ENCODE measurements at regions of chr1 and their contacts with region 1.

Region 1: DNA sequence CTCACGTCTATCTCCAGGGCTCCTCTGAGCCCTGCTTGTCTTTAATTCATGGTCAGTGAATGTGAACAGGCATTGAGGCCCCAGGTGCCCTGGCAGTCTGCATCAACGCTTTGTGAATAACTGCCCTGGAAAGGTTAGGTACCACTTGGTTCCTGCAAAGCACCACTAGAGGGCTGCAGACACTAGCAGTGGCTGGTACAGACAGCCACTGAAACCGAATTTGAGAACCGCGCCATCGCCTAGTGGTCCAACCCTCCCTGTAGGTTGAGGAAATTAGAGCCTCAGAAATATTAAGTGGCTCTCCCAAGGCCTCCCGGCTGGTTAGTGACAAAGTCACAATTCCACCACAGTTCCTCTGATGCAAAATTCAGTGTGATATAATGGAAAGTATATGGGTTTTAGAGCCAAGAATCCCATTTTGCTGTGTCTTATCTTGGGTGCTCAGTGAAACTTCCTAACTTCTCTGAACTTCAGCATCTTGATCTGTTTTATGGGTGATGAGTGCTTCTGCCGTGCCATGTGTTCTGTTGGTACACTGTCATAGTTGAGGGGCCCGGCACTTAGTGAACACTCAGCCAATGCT is 46.2 kb upstream of the BCL9 start:
- DNase-seq: peak; percentile 73 to 88 (median 85)
- H3K4me3 ChIP-seq: no peak overlapping the region
- H3K27ac ChIP-seq: no peak overlapping the region
- H3K4me1 ChIP-seq: no peaks in the 10 kb centered on the region
- H3K27me3 ChIP-seq: peaks cover 0 to 4% (median 0%) of the 10 kb centered on the region in 5 experiments

Region 2: GRCh38 chr1:147579532-147579931 is 84.4 kb after region 1 on chr1:
- CTCF ChIA-PET with region 1: no interaction called
- POLR2A ChIA-PET with region 1: no interaction called
- DNase-seq: peak in 1 of 3 donors; percentile 8
- H3K4me3 ChIP-seq: no peak overlapping the region
- H3K27ac ChIP-seq: no peak overlapping the region
- H3K4me1 ChIP-seq: peaks cover 0 to 11% (median 9%) of the 10 kb centered on the region in 4 experiments
- H3K27me3 ChIP-seq: peaks cover 2 to 23% (median 12%) of the 10 kb centered on the region in 5 experiments

Region 3: DNA sequence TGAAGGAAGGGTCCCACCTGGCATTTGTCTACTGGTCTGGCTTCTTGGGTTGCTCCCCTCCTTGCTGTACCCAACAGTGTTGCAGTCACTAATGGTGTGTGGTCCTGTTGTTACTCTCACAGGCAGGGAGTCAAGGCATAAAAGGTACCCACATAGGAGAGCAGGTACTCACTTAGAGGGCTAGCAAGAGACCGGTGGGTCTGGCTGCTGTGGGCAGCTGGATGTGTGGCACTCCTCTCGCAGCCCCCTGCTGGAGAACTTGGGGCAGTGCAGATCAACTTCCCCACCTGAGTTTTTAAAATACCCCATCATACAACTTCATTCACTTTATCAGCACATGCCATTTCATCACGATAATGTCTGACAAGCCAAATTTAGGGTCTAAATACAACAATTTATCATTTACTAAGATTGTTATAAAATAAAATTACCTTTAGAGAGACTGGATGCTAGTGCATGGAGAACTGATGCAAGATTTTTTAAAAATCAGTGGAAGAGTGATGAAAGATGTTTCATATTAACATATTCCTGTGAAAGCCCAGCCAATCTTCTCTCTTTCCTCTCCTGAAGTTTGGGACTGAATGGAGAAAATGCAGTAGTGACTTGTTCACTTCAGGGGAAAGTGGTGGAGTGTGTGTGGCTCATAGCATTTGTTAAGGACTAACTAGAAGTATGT is 132.5 kb after region 1 on chr1:
- CTCF ChIA-PET with region 1: interaction called, 19 read pairs
- POLR2A ChIA-PET with region 1: no interaction called
- DNase-seq: peak; percentile 44 to 57 (median 56)
- H3K4me3 ChIP-seq: no peak overlapping the region
- H3K27ac ChIP-seq: no peak overlapping the region
- H3K4me1 ChIP-seq: peaks cover 10 to 21% (median 13%) of the 10 kb centered on the region in 4 experiments
- H3K27me3 ChIP-seq: no peaks in the 10 kb centered on the region

Region 4: DNA sequence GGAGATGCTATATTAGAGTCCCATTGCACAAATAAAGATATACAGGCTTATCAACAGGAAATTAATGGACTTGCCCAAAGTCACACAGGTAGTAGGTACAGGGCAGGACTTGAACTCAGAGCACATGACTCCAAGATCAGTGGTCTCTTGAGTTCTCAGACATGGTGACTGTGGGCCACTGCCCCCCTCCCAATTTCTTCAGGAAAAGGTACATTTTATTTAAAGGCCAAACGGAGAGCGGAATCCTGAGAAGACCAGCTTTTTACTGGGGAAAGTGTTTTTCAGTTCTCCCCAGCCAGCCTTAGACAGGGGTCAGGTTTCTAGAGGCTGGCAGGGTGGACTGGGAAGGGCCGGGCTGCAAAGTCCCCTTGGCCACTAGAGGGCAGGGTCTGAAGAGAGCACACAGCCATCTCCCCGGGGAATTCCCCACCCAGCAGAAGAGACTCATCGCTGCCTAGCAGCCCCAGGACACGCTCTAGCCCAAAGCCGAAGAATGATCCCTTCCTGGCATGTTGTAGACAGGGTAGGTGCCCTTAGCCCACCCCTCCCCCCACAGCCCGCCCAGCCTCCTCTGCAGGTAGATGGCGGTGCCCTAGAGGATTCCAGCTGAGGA is 145.6 kb after region 1 on chr1:
- CTCF ChIA-PET with region 1: interaction called, 17 read pairs
- POLR2A ChIA-PET with region 1: no interaction called
- DNase-seq: peak; percentile 78 to 89 (median 86)
- H3K4me3 ChIP-seq: no peak overlapping the region
- H3K27ac ChIP-seq: no peak overlapping the region
- H3K4me1 ChIP-seq: peaks cover 0 to 6% (median 2%) of the 10 kb centered on the region in 4 experiments
- H3K27me3 ChIP-seq: no peaks in the 10 kb centered on the region

Measured in common myeloid progenitor, CD34-positive (primary cell).